ENCODE measurements at regions of chr17 and their contacts with region 1.

Region 1: GRCh38 chr17:65022751-65023700 is 33.5 kb downstream of the GNA13 start:
- DNase-seq: peak; percentile 76
- CTCF ChIP-seq: no peak

Region 2: GRCh38 chr17:64773836-64774761 is 248.9 kb before region 1 on chr17:
- CTCF ChIA-PET with region 1: no interaction called
- POLR2A ChIA-PET with region 1: no interaction called
- DNase-seq: peak; percentile 53
- CTCF ChIP-seq: no peak

Region 3: DNA sequence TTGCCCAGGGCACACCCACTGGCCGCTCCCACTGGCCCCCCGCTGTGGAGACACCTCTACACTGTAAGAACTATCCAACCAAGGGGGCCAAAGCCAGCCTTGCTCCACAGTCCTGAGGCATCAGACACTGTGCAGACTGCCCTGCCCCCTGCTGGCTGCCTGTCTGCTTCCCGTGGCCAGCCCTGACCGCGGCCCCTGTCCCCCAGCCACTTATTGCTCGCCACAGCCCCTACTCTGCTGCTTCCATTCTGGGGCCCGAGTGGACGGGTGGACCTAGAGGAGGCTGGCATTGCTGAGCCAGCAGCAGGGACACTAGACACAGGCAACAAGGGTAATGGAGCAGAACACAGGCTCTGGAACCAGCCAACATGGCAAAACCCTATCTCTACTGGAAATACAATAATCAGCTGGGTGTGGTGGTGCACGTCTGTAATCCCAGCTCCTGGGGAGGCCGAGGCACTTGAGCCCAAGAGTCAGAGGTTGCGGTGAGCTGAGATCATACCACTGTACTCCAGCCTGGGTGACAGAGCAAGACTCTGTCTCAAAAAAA is 84.0 kb before region 1 on chr17:
- CTCF ChIA-PET with region 1: no interaction called
- POLR2A ChIA-PET with region 1: no interaction called
- DNase-seq: peak; percentile 75
- CTCF ChIP-seq: peak; percentile 73

Region 4: GRCh38 chr17:65008882-65009281 is 14.1 kb before region 1 on chr17:
- CTCF ChIA-PET with region 1: interaction called, 14 read pairs
- POLR2A ChIA-PET with region 1: no interaction called
- DNase-seq: no peak
- CTCF ChIP-seq: no peak